Ascending aorta (tissue), 2 donors: ENCODE measurements at regions of chr5 and their contacts with region 1.

Region 1: GRCh38 chr5:149561848-149562247 is 10.6 kb upstream of the CSNK1A1 start:
- DNase-seq: no peak
- H3K4me3 ChIP-seq: no peak overlapping the region
- H3K27ac ChIP-seq: peak overlapping the region; percentile 82 to 92
- H3K4me1 ChIP-seq: peaks cover 0 to 25% of the 10 kb centered on the region in 2 donors
- H3K27me3 ChIP-seq: no peaks in the 10 kb centered on the region
- CTCF ChIP-seq: no peak

Region 2: DNA sequence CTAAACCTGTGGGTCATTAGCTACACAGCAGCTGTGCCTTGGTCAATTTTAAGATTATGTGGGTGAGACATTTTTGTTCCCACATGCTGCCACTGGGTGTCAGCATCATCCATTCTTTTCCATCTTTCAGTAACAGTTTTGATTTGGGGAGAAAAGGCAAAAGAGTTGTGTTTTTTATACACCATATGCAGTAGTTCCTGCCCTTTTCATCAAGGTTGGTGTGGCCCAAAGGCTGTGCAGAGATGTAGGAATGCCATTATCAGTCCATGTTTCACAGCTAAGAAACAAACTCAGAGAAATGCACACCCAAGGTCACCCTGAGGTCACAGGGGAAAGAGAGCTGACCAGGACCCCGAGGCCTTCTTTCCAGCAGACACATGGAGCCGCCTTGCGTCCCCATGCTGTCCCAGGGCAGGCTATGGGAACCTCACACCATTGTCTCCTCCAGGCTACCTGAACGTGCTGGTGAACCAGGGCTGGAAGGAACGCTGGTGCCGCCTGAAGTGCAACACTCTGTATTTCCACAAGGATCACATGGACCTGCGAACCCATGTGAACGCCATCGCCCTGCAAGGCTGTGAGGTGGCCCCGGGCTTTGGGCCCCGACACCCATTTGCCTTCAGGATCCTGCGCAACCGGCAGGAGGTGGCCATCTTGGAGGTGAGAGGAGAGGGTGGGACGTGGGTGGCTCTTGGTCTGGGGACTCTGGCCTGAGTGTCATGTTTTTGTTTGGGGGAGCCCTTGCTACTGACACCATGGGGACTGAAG is 244.4 kb before region 1 on chr5:
- intact Hi-C with region 1: loop called (anchors 2 kb)
- DNase-seq: no peak
- H3K4me3 ChIP-seq: no peak overlapping the region
- H3K27ac ChIP-seq: no peak overlapping the region
- H3K4me1 ChIP-seq: peaks cover 0 to 6% of the 10 kb centered on the region in 2 donors
- H3K27me3 ChIP-seq: no peaks in the 10 kb centered on the region
- CTCF ChIP-seq: peak; percentile 43 to 67 (median 60)

Region 3: GRCh38 chr5:149367249-149367971 is 194.4 kb before region 1 on chr5:
- intact Hi-C with region 1: loop called (anchors 2 kb)
- DNase-seq: peak in 1 of 2 donors; percentile 86
- H3K4me3 ChIP-seq: peak overlapping the region in 1 of 2 donors; percentile 32
- H3K27ac ChIP-seq: peak overlapping the region; percentile 55 to 62
- H3K4me1 ChIP-seq: peaks cover 5 to 18% of the 10 kb centered on the region in 2 donors
- H3K27me3 ChIP-seq: no peaks in the 10 kb centered on the region
- CTCF ChIP-seq: peak; percentile 85 to 87 (median 85)

Region 4: GRCh38 chr5:149442563-149443182 is 119.2 kb before region 1 on chr5:
- intact Hi-C with region 1: loop called (anchors 1 kb)
- DNase-seq: peak in 1 of 2 donors; percentile 89
- H3K4me3 ChIP-seq: no peak overlapping the region
- H3K27ac ChIP-seq: peak overlapping the region; percentile 58 to 71
- H3K4me1 ChIP-seq: peaks cover 7 to 10% of the 10 kb centered on the region in 2 donors
- H3K27me3 ChIP-seq: no peaks in the 10 kb centered on the region
- CTCF ChIP-seq: peak; percentile 86 to 95 (median 90)

Region 5: DNA sequence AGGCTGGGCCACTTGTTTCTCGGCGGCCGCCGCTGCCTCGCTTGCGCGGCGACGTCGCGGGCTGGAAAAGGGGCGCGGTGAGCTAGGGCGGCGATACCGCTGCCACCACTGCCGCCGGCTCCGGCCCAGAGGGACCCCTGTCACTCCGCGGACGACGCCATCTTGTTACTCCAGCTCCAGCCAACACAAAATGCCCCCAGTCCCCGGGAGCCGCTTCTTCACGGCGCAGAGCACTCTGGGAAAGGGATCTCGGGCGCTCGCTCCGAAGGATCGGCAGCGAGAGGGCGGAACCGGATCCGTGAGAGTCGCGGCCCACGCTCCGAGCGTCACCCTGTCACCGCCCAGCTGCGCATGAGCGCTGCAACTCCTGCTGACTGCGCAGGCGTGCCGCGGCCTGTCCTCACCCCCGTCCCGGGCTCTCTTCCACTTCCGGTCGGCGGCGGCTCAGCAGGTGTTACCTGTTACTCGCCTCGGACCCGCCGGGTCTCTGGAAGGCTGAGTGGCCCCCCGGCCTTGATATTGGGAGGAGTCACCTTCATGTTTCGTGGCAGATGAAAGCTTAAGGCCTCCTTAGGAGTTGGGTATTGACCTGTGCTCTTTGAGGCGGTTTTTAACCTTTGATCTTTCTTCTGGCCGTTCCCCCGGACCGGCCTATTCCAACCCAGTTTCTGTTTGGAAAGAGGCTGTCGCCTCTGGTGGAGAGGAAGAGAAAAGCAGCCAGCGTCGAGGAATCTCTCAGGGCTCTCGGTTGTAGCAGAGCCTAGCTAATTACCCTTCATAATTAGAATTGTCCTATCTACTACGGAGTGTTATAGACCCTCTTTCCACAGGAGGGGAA is 10.4 kb before region 1 on chr5 and contains the start of gene CSNK1A1:
- intact Hi-C with region 1: loop called (anchors 1 kb)
- DNase-seq: peak; percentile 86 to 98
- H3K4me3 ChIP-seq: peak within 1 kb of the TSS; percentile 81 to 96
- H3K27ac ChIP-seq: peak within 1 kb of the TSS; percentile 95 to 98
- H3K4me1 ChIP-seq: peaks cover 7 to 26% of the 10 kb centered on the region in 2 donors
- H3K27me3 ChIP-seq: no peaks in the 10 kb centered on the region
- CTCF ChIP-seq: peak; percentile 88 to 93 (median 91)
- total RNA-seq, gene CSNK1A1: 219 TPM